Activated CD4-positive, alpha-beta memory T cell treated with anti-CD3 and anti-CD28 coated beads for 36 hours (primary cell): ENCODE measurements at regions of chr7 and their contacts with region 1.

Region 1: GRCh38 chr7:23273141-23273599 is 26.0 kb upstream of the MALSU1 start:
- DNase-seq: peak; percentile 93
- H3K4me3 Mint-ChIP-seq: peak overlapping the region; percentile 61
- H3K27ac Mint-ChIP-seq: peak overlapping the region; percentile 20
- H3K4me1 Mint-ChIP-seq: peaks cover 9% of the 10 kb centered on the region
- H3K27me3 Mint-ChIP-seq: peaks cover 3% of the 10 kb centered on the region

Region 2: DNA sequence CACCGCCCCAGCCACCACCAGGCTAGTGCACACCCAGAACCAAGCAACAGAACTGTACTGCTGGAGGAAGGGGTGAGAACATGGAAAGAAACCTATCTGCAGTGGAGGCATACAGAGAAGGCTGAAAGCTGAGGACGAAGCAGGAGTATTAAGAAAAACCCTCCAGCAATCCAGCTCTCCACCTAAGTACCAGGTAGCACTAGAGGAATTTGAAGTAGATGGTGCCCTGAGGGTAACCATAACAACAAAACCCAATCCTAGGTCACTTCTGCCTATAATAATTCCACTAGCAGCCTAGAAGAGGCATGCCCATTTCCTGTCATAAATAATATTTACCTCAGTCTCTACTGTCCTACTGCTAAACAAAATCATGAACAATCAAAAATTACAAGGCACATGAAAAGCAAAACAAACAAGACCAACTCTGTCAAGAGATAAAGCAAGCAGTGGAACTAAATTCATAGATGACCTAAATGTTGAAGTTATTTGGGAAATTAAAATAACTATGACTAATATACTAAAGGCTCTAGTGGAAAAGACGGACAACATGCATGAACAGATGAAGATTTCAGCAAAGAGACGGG is 310.3 kb before region 1 on chr7:
- CTCF ChIA-PET with region 1: no interaction called
- POLR2A ChIA-PET with region 1: no interaction called
- intact Hi-C with region 1: no loop called
- DNase-seq: no peak
- H3K4me3 Mint-ChIP-seq: no peak overlapping the region
- H3K27ac Mint-ChIP-seq: no peak overlapping the region
- H3K4me1 Mint-ChIP-seq: no peaks in the 10 kb centered on the region
- H3K27me3 Mint-ChIP-seq: no peaks in the 10 kb centered on the region

Region 3: DNA sequence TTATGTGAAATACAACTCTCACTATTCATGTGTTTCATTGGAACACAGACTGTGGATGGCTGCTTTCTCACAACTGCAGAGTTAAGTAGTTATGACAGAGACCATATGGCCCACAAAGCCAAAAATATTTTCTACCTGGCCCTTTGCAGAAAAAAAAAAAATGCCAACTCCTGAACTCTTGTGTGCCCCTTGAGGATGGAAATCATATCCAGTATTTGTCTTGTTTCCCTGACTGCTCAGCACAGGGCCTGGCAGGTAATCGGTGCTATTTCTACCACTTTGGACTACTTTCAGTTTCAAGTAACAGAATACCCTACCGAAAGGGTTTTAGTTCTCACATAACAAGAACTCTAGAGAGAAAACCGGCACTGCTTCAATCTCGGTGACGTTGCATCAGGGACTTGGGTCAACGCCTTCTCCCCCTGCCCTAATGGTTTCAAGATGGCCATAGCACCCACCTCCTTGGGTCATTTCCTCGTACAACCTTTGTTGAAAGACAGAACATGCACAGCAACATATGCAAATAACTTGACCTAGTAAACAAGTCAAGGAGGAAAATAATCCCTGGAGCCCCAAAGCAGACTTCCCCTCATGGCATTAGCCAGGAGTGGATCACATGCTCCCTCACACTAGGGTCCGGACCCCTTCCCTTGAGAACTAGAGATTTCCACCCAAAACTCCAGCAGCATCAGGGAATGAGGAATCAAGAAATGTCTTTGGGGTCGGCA is 38.4 kb before region 1 on chr7:
- CTCF ChIA-PET with region 1: no interaction called
- POLR2A ChIA-PET with region 1: no interaction called
- intact Hi-C with region 1: no loop called
- DNase-seq: no peak
- H3K4me3 Mint-ChIP-seq: no peak overlapping the region
- H3K27ac Mint-ChIP-seq: no peak overlapping the region
- H3K4me1 Mint-ChIP-seq: peaks cover 5% of the 10 kb centered on the region
- H3K27me3 Mint-ChIP-seq: no peaks in the 10 kb centered on the region

Region 4: DNA sequence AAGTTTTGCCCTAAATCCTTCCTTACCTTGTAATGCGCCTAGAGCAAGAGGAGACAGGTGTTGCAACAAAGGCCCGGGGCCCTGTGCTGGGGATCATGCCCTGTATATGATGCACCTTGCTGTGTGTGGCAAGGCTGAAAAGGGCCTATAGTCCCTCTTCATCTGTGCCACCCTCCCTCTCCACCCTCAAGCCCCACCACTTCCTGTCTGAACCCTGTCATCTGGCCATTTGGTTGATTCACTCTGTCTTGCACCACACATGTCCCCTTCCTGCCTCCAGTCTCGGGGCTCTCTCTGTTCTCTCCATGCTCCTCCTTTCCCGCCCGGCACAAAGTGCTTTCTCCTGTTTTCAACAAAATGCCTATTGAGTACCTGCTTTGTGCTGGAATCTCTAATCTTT is 14.4 kb after region 1 on chr7:
- CTCF ChIA-PET with region 1: interaction called, 11 read pairs
- POLR2A ChIA-PET with region 1: no interaction called
- intact Hi-C with region 1: no loop called
- DNase-seq: peak; percentile 47
- H3K4me3 Mint-ChIP-seq: no peak overlapping the region
- H3K27ac Mint-ChIP-seq: no peak overlapping the region
- H3K4me1 Mint-ChIP-seq: peaks cover 6% of the 10 kb centered on the region
- H3K27me3 Mint-ChIP-seq: no peaks in the 10 kb centered on the region

Region 5: GRCh38 chr7:23357190-23358093 is 84.3 kb after region 1 on chr7:
- CTCF ChIA-PET with region 1: interaction called, 17 read pairs
- POLR2A ChIA-PET with region 1: no interaction called
- intact Hi-C with region 1: loop called (anchors 2 kb)
- DNase-seq: no peak
- H3K4me3 Mint-ChIP-seq: no peak overlapping the region
- H3K27ac Mint-ChIP-seq: no peak overlapping the region
- H3K4me1 Mint-ChIP-seq: peaks cover 20% of the 10 kb centered on the region
- H3K27me3 Mint-ChIP-seq: peaks cover 17% of the 10 kb centered on the region

Region 6: GRCh38 chr7:23462846-23463245 is 189.7 kb after region 1 on chr7:
- CTCF ChIA-PET with region 1: interaction called, 3 read pairs
- POLR2A ChIA-PET with region 1: interaction called, 6 read pairs
- intact Hi-C with region 1: loop called (anchors 1 kb)
- DNase-seq: peak; percentile 32
- H3K4me3 Mint-ChIP-seq: no peak overlapping the region
- H3K27ac Mint-ChIP-seq: no peak overlapping the region
- H3K4me1 Mint-ChIP-seq: peaks cover 8% of the 10 kb centered on the region
- H3K27me3 Mint-ChIP-seq: peaks cover 56% of the 10 kb centered on the region

Region 7: GRCh38 chr7:23514755-23515154 is 241.6 kb after region 1 on chr7:
- CTCF ChIA-PET with region 1: interaction called, 16 read pairs
- POLR2A ChIA-PET with region 1: no interaction called
- intact Hi-C with region 1: no loop called
- DNase-seq: peak; percentile 31
- H3K4me3 Mint-ChIP-seq: no peak overlapping the region
- H3K27ac Mint-ChIP-seq: peak overlapping the region; percentile 71
- H3K4me1 Mint-ChIP-seq: peaks cover 19% of the 10 kb centered on the region
- H3K27me3 Mint-ChIP-seq: no peaks in the 10 kb centered on the region

Region 8: GRCh38 chr7:23539494-23539907 is 266.3 kb after region 1 on chr7:
- CTCF ChIA-PET with region 1: interaction called, 18 read pairs
- POLR2A ChIA-PET with region 1: no interaction called
- intact Hi-C with region 1: loop called (anchors 2 kb)
- DNase-seq: no peak
- H3K4me3 Mint-ChIP-seq: peak overlapping the region; percentile 6
- H3K27ac Mint-ChIP-seq: peak overlapping the region; percentile 74
- H3K4me1 Mint-ChIP-seq: peaks cover 14% of the 10 kb centered on the region
- H3K27me3 Mint-ChIP-seq: no peaks in the 10 kb centered on the region